Activated naive CD4-positive, alpha-beta T cell treated with anti-CD3 and anti-CD28 coated beads for 36 hours (primary cell): ENCODE measurements at regions of chr17 and their contacts with region 1.

Region 1: DNA sequence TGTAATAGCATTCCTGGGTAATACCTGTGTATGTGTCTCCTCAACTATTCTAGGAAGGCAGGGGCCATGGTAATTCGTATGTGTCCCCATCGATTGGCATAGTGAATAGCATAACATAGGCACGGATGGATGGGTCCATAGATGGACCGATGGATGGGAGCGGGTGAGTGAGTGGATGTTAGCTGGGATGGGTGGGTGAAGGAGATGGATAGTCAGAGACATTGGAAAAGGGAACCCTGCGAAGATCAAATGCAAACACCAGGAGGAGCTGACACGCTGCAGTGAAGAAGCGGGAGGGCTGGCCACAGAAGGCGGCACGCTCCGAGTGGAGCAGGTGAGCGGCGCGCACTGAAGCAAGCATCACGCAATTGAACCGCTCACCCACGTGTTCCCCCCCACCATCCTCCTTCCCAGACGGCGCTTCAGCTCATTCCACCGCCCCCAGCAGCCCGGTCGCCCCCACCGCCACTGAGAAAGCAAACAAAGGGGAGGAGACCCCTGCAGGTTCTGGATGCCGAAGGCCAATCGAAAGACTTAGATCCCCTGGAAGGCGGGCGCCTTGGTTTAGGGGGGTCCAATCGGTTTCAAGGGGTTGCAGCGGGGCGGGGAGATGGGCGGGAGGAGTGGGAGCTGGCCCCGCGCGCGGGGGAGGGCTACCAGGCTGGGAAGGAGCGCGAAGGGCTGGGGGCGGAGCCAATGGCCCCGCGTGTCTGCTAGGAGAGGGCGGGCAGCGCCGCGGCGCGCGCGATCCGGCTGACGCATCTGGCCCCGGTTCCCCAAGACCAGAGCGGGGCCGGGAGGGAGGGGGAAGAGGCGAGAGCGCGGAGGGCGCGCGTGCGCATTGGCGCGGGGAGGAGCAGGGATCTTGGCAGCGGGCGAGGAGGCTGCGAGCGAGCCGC is at the start of gene ARRB2:
- DNase-seq: peak; percentile 97
- H3K4me3 Mint-ChIP-seq: peak within 1 kb of the TSS; percentile 80
- H3K27ac Mint-ChIP-seq: peak within 1 kb of the TSS; percentile 85
- H3K4me1 Mint-ChIP-seq: peaks cover 56% of the 10 kb centered on the region
- H3K27me3 Mint-ChIP-seq: no peaks in the 10 kb centered on the region
- total RNA-seq, gene ARRB2: 169 to 174 TPM

Region 2: GRCh38 chr17:4366327-4367063 is 343.5 kb before region 1 on chr17 and contains the start of gene UBE2G1:
- CTCF ChIA-PET with region 1: no interaction called
- intact Hi-C with region 1: loop called (anchors 5 kb)
- DNase-seq: peak; percentile 99
- H3K4me3 Mint-ChIP-seq: peak within 1 kb of the TSS; percentile 71
- H3K27ac Mint-ChIP-seq: peak within 1 kb of the TSS; percentile 81
- H3K4me1 Mint-ChIP-seq: peaks cover 31% of the 10 kb centered on the region
- H3K27me3 Mint-ChIP-seq: no peaks in the 10 kb centered on the region
- total RNA-seq, gene UBE2G1: 33.3 to 36.1 TPM

Region 3: GRCh38 chr17:4759776-4760236 is 49.8 kb after region 1 on chr17:
- CTCF ChIA-PET with region 1: no interaction called
- intact Hi-C with region 1: no loop called
- DNase-seq: no peak
- H3K4me3 Mint-ChIP-seq: no peak overlapping the region
- H3K27ac Mint-ChIP-seq: no peak overlapping the region
- H3K4me1 Mint-ChIP-seq: no peaks in the 10 kb centered on the region
- H3K27me3 Mint-ChIP-seq: peaks cover 3% of the 10 kb centered on the region

Region 4: GRCh38 chr17:4789901-4790704 is 80.1 kb after region 1 on chr17:
- CTCF ChIA-PET with region 1: interaction called, 12 read pairs
- intact Hi-C with region 1: loop called (anchors 1 kb)
- DNase-seq: peak; percentile 93
- H3K4me3 Mint-ChIP-seq: peak overlapping the region; percentile 85
- H3K27ac Mint-ChIP-seq: peak overlapping the region; percentile 95
- H3K4me1 Mint-ChIP-seq: peaks cover 30% of the 10 kb centered on the region
- H3K27me3 Mint-ChIP-seq: peaks cover 38% of the 10 kb centered on the region

Region 5: GRCh38 chr17:4833178-4833940 is 123.3 kb after region 1 on chr17 and contains the start of gene MINK1:
- CTCF ChIA-PET with region 1: no interaction called
- intact Hi-C with region 1: loop called (anchors 5 kb)
- DNase-seq: peak; percentile 82
- H3K4me3 Mint-ChIP-seq: peak within 1 kb of the TSS; percentile 85
- H3K27ac Mint-ChIP-seq: peak within 1 kb of the TSS; percentile 83
- H3K4me1 Mint-ChIP-seq: peaks cover 27% of the 10 kb centered on the region
- H3K27me3 Mint-ChIP-seq: no peaks in the 10 kb centered on the region
- total RNA-seq, gene MINK1: 49.1 to 50.4 TPM

Region 6: DNA sequence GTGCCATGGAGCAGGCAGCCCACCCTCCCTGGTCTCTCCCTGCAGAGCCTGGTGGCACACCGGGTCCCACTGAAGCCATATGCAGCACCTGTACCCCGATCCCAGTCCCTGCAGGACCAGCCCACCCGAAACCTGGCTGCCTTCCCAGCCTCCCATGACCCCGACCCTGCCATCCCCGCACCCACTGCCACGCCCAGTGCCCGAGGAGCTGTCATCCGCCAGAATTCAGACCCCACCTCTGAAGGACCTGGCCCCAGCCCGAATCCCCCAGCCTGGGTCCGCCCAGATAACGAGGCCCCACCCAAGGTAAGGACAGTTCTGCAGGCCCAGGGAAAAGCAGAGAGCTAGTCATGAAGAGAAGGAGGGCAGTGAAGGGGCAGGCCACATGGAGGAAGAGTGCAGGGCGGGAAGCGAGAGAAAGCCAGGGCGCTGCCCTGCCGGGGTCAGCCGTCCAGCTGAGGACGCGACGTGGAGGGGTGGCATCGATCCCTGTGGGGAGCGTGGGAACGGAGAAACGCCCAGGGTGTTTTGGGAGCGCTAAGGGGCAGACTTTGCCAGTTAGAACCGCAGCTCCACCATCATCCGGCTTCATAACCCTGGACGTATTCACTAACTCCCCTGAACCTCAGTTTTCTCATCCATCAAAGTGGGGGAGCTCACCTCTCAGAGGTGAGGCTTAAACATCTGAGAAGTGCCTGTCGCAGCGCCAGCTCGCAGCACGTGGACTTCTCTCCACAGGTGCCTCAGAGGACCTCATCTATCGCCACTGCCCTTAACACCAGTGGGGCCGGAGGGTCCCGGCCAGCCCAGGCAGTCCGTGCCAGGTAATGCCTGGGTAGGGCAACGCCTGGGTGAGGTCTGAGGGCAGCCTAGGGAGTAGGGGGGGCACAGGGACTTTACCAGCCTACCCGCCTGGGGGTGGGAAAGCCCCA is 181.6 kb after region 1 on chr17:
- CTCF ChIA-PET with region 1: no interaction called
- intact Hi-C with region 1: loop called (anchors 1 kb)
- DNase-seq: no peak
- H3K4me3 Mint-ChIP-seq: no peak overlapping the region
- H3K27ac Mint-ChIP-seq: no peak overlapping the region
- H3K4me1 Mint-ChIP-seq: no peaks in the 10 kb centered on the region
- H3K27me3 Mint-ChIP-seq: no peaks in the 10 kb centered on the region

Region 7: GRCh38 chr17:4939796-4940624 is 230.0 kb after region 1 on chr17 and contains the starts of genes RNF167 and SLC25A11:
- CTCF ChIA-PET with region 1: no interaction called
- intact Hi-C with region 1: loop called (anchors 2 kb)
- DNase-seq: peak; percentile 98
- H3K4me3 Mint-ChIP-seq: peak within 1 kb of the TSS; percentile 94
- H3K27ac Mint-ChIP-seq: peak within 1 kb of the TSS; percentile 99
- H3K4me1 Mint-ChIP-seq: peaks cover 57% of the 10 kb centered on the region
- H3K27me3 Mint-ChIP-seq: no peaks in the 10 kb centered on the region
- total RNA-seq, gene RNF167: 133 to 140 TPM
- total RNA-seq, gene SLC25A11: 63.8 to 65.2 TPM

Region 8: GRCh38 chr17:4966844-4967538 is 256.9 kb after region 1 on chr17:
- CTCF ChIA-PET with region 1: no interaction called
- intact Hi-C with region 1: loop called (anchors 1 kb)
- DNase-seq: peak; percentile 97
- H3K4me3 Mint-ChIP-seq: no peak overlapping the region
- H3K27ac Mint-ChIP-seq: no peak overlapping the region
- H3K4me1 Mint-ChIP-seq: peaks cover 39% of the 10 kb centered on the region
- H3K27me3 Mint-ChIP-seq: no peaks in the 10 kb centered on the region